ENCODE measurements at regions of chr14 and their contacts with region 1.

Region 1: GRCh38 chr14:64928239-64929013 is 14.1 kb downstream of the GPX2 start:
- DNase-seq: no peak
- ATAC-seq: no peak
- H3K4me3 ChIP-seq: no peak overlapping the region
- H3K27ac ChIP-seq: no peak overlapping the region
- H3K4me1 ChIP-seq: no peaks in the 10 kb centered on the region
- H3K27me3 ChIP-seq: no peaks in the 10 kb centered on the region
- CTCF ChIP-seq: no peak
- EP300 ChIP-seq: no peak
- POLR2A ChIP-seq: no peak
- RAD21 ChIP-seq: no peak

Region 2: DNA sequence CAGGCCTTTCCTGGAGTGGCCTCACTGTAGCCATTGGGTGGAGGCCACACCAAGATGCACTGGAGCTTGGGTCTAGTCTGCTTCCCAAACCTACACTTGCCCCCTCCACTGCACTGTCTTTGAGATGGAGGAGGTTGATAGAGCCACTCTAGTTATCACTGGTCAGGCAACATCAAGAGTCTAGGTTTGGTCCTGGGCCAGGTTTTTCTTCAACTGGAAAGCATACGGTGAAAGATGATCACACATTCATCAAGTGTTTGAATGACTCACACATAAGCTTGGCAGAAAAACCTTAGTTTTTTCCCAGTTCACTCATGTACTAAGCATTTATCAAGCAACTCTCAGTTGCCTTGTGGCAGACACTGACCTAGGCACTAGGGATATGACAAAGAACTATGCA is 139.8 kb before region 1 on chr14:
- CTCF ChIA-PET with region 1: no interaction called
- POLR2A ChIA-PET with region 1: no interaction called
- in situ Hi-C with region 1: no loop called
- intact Hi-C with region 1: no loop called
- DNase-seq: peak in 1 of 4 experiments; percentile 16
- ATAC-seq: no peak
- H3K4me3 ChIP-seq: no peak overlapping the region
- H3K27ac ChIP-seq: no peak overlapping the region
- H3K4me1 ChIP-seq: no peaks in the 10 kb centered on the region
- H3K27me3 ChIP-seq: no peaks in the 10 kb centered on the region
- CTCF ChIP-seq: no peak
- EP300 ChIP-seq: no peak
- POLR2A ChIP-seq: no peak
- RAD21 ChIP-seq: no peak

Region 3: GRCh38 chr14:64914237-64914971 is 14.0 kb before region 1 on chr14 and contains the start of gene CHURC1:
- CTCF ChIA-PET with region 1: no interaction called
- POLR2A ChIA-PET with region 1: interaction called, 10 read pairs
- in situ Hi-C with region 1: no loop called
- intact Hi-C with region 1: no loop called
- DNase-seq: peak; percentile 82 to 94 (median 85)
- ATAC-seq: peak; percentile 98
- H3K4me3 ChIP-seq: peak within 1 kb of the TSS; percentile 78
- H3K27ac ChIP-seq: peak within 1 kb of the TSS; percentile 86
- H3K4me1 ChIP-seq: peaks cover 0 to 3% of the 10 kb centered on the region in 2 experiments; a peak in 2 of 5 replicates
- H3K27me3 ChIP-seq: no peaks in the 10 kb centered on the region
- CTCF ChIP-seq: no peak
- EP300 ChIP-seq: no peak
- POLR2A ChIP-seq: peak; percentile 91
- RAD21 ChIP-seq: no peak
- polyA plus RNA-seq, gene CHURC1: 223 to 239 TPM

Region 4: GRCh38 chr14:64986578-64987571 is 58.4 kb after region 1 on chr14 and contains the start of gene FNTB:
- CTCF ChIA-PET with region 1: no interaction called
- POLR2A ChIA-PET with region 1: no interaction called
- in situ Hi-C with region 1: no loop called
- intact Hi-C with region 1: no loop called
- DNase-seq: peak; percentile 86 to 93 (median 88)
- ATAC-seq: peak; percentile 99
- H3K4me3 ChIP-seq: peak within 1 kb of the TSS; percentile 67
- H3K27ac ChIP-seq: peak within 1 kb of the TSS; percentile 83
- H3K4me1 ChIP-seq: peaks cover 0 to 4% of the 10 kb centered on the region in 2 experiments; a peak in 3 of 5 replicates
- H3K27me3 ChIP-seq: no peaks in the 10 kb centered on the region; a peak in 1 of 5 replicates
- CTCF ChIP-seq: peak; percentile 82 to 94 (median 93)
- EP300 ChIP-seq: 0 out of 2 replicates have a peak, but pooled peaks have one; percentile 34
- POLR2A ChIP-seq: peak; percentile 84
- RAD21 ChIP-seq: peak; percentile 84 to 94
- polyA plus RNA-seq, gene FNTB: 14.1 to 23.2 TPM

Region 5: DNA sequence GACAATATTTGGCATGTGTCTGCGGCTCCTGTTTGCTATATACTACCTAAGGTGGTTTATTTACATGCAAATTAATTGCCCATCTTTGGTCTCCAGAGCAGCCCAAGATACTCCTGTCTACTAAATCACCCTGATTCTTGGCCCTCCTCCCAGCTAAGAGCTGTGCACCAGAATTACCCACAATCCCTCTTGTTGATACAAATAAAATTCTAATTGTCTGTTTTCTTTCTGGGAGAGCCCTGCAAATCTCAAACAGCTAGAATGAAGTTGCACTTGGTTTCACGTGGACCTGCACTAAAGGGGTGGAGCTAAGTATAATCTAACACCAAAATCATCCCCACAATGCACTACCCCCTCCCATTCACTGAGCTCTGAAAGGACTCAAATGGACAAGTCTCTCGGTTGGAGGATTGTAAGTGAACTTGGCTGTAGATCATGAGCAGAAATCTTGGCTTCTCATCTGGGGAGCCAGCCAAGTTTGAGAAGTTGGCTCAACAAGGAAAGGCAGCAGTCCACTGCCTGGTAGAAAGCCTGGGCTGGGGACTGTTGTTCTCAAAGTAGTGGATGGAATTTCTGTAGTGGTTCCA is 167.3 kb after region 1 on chr14:
- CTCF ChIA-PET with region 1: no interaction called
- POLR2A ChIA-PET with region 1: no interaction called
- in situ Hi-C with region 1: no loop called
- intact Hi-C with region 1: no loop called
- DNase-seq: peak in 1 of 4 experiments; percentile 31
- ATAC-seq: peak; percentile 80
- H3K4me3 ChIP-seq: no peak overlapping the region
- H3K27ac ChIP-seq: peak overlapping the region; percentile 5; the same call in 1 of the 3 replicates
- H3K4me1 ChIP-seq: peaks cover 4 to 24% of the 10 kb centered on the region in 2 experiments
- H3K27me3 ChIP-seq: no peaks in the 10 kb centered on the region
- CTCF ChIP-seq: no peak
- EP300 ChIP-seq: no peak
- POLR2A ChIP-seq: no peak
- RAD21 ChIP-seq: no peak